HCT116 (cell line): ENCODE measurements at regions of chr9 and their contacts with region 1.

Region 1: GRCh38 chr9:131755541-131756198 is 15.8 kb upstream of the RAPGEF1 start:
- DNase-seq: peak; percentile 75
- ATAC-seq: peak; percentile 100
- H3K4me3 ChIP-seq: no peak overlapping the region
- H3K27ac ChIP-seq: no peak overlapping the region
- H3K4me1 ChIP-seq: peaks cover 0 to 4% of the 10 kb centered on the region in 2 experiments; a peak in 2 of 4 replicates
- H3K27me3 ChIP-seq: no peaks in the 10 kb centered on the region
- CTCF ChIP-seq: peak; percentile 86 to 87 (median 86)
- POLR2A ChIP-seq: no peak
- RAD21 ChIP-seq: peak; percentile 62

Region 2: DNA sequence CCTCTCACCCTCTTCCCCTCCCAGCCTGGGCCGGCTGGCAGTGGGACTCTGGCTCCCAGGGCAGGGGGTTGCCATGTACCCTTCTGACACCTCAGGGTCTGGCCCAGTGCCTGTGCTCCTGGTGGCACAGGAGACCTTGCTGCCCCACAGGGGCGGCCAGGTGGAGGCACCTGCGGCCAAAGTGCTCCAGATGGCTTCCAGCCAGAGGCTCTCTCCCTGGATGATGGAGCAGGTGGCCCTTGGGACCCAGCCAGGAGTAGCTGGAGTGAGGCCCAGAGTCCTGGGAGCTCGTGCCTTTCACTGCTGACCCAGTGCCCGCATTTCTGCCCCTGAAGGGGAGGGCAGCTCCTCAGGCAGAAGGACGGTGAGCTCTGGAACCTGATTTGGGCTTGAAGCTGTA is 493.5 kb after region 1 on chr9:
- CTCF ChIA-PET with region 1: interaction called, 12 read pairs
- POLR2A ChIA-PET with region 1: no interaction called
- RAD21 ChIA-PET with region 1: no interaction called
- intact Hi-C with region 1: loop called (anchors 1 kb)
- DNase-seq: no peak
- ATAC-seq: no peak
- H3K4me3 ChIP-seq: no peak overlapping the region
- H3K27ac ChIP-seq: no peak overlapping the region
- H3K4me1 ChIP-seq: peaks cover 0 to 3% of the 10 kb centered on the region in 2 experiments; a peak in 1 of 4 replicates
- H3K27me3 ChIP-seq: no peaks in the 10 kb centered on the region
- CTCF ChIP-seq: no peak
- POLR2A ChIP-seq: no peak
- RAD21 ChIP-seq: no peak